GM18951 (cell line): ENCODE measurements at regions of chr1 and their contacts with region 1.

Region 1: DNA sequence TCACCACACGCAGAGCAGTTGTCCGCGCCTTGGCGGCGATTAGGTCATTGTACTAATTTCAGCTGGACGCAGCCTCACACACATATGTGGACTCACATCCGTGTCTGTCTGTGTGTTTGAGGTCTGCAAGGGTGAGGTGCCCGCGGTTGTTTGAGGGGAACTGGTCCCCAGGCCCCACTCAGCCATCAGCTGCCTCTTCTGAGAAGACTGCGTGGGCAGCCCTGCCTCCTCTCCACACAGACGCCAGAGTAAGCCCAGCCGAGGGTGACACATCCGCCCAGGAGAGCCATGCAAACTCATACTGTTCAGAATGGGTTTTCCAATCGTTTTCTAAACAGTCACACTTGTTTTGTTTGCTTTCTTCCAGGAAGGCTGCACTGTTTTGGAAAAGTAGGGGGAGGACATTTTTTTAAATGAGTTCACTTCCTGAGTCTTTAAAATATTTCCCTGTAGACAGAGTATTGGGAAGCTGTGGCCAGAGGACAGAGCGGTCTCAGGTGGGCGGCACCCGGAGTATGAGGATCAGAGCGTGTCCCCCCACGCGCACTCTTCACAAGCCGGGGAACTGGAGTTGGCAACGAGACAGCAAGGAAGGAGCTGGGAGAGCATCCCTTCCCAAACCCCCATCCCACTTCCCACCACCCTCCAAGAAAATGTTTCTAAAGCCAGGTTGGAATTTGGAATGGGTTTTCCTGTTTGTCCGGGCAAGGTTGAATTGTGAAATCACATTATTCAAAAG is 53.3 kb downstream of the TOMM20 start:
- POLR2A ChIP-seq: peak; percentile 32

Region 2: GRCh38 chr1:234500269-234500668 is 575.1 kb before region 1 on chr1:
- in situ Hi-C with region 1: loop called (anchors 5 kb)
- POLR2A ChIP-seq: no peak

Region 3: DNA sequence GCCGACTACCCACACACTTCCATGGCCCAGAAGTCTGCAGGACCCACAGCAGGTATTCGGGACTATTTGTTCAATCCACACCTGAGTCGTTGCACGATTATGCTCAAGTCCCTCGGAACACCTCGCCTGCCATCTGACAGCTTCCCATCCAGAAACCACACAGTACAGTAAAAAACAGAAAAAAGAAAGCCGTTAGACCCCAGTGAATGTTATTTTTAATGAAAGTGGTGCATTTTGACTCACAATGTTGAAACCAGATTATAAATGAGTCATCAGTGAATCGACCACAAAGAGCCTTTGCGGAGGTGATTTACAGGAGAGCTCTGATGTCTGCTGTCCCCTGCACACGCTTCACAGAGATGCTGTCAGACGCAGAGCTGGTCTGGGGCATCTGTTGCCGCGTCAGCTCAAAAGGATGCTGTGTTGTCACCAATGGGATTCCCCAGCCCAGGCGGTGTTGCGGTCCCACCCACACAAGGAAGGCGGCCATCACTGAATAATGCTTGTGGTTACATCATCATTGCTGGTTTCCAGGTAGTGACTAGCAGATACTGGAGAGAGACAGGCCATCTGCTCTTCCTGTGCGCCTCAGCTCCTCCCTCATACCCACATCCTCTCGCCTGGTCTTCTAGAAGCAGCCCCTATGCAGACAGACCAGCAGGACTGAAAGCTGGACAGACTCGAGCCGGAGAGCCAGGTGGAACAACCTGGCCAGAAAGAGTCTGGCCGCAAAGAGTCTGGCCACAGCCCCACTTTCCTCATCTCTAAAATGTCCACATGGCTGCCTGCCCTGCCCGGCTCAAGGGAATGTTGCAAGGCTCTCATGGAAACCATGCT is 63.5 kb before region 1 on chr1:
- in situ Hi-C with region 1: loop called (anchors 10 kb)
- POLR2A ChIP-seq: peak; percentile 63

Region 4: GRCh38 chr1:235147269-235147668 is 71.9 kb after region 1 on chr1:
- in situ Hi-C with region 1: no loop called
- POLR2A ChIP-seq: no peak

Region 5: DNA sequence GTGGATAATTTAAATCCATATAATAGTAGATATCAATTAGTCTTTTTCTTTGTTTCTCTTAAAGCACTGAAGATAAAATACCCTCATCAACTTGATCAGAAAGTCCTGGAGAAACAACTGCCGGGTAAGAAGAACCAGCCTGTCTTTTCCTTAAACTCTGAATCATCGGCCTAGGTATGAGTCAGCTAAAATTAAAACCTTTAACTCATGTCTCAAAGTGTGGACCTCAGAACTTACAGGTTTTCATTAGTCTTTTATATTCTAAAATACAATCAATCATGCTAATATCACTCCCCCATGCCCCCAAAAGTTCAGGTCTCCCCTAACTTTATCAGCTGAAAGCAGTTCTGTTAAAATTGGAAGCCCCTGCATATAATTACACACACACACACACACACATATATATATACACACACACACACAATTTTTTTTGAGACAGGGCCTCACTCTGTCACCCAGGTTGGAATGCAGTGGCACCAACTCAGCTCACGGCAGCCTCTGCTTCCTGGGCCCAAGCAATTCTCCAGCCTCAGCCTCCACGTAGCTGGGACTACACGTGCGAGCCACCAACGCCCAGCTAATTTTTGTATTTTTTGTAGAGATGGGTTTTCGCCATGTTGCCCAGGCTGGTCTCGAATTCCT is 367.6 kb after region 1 on chr1:
- in situ Hi-C with region 1: no loop called
- POLR2A ChIP-seq: no peak